Posterior cingulate gyrus (tissue), 11 donors: ENCODE measurements at regions of chr3 and their contacts with region 1.

Region 1: DNA sequence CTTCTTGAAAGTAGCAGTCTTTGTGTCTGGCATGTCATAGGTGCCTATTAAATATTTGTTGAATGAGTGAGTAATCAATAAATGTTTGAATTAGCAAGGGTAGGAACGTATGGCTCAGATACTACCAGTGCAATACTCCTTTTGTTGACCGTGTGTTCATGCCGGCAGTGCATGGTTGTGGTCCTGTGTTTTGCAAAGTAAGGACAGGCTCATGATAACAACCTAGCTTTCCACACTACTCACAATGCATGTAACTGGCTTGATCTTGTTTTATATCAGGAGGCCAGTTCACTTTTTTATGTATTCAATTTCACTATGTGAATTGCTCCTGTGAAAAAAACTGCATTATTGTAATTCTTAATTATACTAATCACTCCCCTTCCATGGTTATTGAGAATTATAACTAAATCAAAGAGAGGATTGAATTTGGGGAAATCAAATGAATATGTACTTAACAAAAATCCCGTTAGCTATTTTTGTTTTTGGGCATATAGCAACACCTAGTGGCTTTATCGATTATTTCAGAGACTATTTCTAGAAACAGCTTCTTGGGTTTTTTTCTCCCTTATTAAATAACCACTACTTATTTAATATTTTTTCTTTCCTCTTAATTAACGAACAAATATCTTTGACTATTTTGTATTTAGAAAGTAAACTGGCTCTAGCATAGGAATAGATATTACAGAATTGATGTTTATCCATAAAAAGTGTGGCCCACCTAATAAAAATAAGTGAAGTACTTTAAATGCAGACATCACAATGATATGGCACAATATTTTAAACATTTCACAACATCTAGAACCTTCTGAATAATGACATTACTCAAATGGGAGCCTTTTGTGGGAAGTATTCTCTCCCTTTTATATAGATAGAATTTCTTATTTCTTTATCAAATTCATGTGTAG is 218.5 kb downstream of the BBX start:
- DNase-seq: no peak

Region 2: DNA sequence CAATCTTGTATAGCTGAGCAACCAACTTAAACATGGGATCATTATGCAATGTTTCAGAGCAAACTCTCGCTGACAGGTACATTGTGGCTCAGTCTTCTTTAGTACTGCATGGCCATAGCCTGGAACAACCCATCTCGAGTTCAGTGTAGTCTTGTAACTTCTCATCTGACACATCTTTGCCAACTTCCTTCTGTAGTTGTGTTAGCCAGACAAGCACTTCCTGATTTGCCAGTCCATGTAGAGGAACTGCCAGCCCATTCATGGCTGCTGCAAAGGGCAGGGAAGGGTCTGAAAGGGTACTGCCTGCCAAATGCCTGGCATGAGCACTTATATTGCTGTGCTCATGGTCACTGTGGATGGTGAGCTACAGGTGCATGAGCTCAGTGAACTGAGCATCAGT is 413.2 kb before region 1 on chr3:
- intact Hi-C with region 1: no loop called
- DNase-seq: no peak

Region 3: GRCh38 chr3:107574650-107575049 is 166.6 kb before region 1 on chr3:
- intact Hi-C with region 1: loop called (anchors 5 kb)
- DNase-seq: no peak

Region 4: DNA sequence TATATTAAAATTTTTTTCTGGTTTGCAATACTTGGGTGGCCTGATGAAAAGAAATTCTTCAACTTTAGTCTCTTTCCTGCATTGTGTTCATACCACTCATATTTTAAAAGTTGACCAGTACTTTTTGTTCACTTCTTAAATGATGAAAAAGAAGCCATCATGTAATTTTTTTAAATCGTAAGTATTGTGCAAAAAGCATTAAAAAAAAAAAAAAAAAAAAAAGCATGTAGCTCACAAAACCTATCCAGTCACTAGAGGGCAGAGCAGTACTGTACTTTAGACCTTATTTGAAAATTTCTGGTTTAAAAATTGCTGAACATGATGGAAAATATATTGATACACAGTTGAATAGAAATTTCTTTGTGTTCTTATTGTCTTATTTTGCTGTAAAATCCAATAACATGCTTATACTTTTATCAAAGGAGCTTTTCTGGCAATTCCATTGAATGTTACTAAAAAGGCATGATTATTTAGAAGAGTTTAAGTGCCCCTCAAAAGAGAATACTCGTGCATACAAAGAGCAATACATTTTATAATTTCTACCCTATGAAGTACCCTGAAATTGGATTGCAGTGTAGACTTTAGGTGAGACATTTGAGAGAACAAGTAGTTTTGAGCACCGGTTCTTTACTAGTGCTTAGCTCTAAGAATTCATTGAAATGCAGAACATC is 80.8 kb before region 1 on chr3:
- intact Hi-C with region 1: loop called (anchors 5 kb)
- DNase-seq: no peak

Region 5: DNA sequence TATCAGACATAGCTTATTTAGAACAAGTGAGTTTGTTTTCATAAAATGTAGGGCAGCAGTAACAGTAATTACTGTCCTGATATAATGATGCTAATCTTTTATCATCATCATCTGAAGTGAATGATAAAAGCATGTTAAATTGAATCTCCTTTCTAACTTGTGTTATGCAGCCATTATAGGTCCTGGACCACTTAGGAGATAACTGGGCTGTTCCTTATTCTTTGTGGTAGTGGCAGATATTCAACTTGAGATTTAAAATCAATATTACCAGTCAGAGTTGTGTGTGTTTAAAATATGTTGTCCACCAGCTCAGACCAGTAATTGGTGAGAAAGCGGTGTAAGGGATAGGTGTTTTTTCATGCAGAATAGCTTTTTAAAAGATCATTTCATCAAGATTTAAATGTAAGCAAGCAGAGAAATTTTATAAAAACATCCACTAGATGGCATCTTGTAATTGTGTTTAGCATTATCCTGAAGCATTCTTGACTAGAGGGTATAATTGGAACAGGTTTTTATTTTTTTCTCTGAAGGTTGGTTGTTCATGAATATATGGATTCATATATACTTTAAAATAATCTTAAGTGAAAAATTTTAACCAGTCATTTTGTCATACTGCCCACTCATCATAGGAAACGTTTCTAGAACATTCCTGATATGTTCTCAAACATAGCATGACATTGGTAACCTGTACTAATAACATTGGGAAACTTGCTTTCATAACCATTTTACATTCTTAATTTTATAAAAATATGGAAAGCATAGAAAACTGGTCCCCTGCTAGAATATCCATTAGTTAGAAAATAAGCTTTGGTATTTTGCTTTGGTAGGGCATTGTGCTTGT is 64.6 kb before region 1 on chr3:
- intact Hi-C with region 1: loop called (anchors 1 kb)
- DNase-seq: no peak

Region 6: GRCh38 chr3:107727102-107727501 is 14.1 kb before region 1 on chr3:
- intact Hi-C with region 1: no loop called
- DNase-seq: no peak

Region 7: GRCh38 chr3:107910713-107911259 is 169.5 kb after region 1 on chr3:
- intact Hi-C with region 1: no loop called
- DNase-seq: no peak